ENCODE measurements at regions of chr22 and their contacts with region 1.

Region 1: DNA sequence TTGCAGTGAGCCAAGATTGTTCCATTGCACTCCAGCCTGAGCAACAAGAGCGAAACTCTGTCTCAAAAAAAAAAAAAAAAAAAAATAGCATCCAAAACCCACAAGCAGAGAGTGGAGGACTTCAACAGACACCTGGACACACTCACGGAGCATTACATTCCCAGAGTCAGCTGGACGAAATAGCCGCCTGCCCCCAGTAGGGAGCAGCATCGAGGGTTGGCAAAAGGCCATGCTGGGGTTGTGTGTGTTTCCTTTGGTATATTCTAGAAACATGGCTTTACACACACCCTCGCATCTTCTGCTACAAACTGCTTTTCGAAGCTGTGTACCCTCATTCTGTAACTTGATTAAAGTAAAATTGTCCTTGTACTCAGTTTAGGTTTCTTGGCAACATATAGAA is 5.3 kb downstream of the ADA2 start:
- DNase-seq: peak; percentile 74
- ATAC-seq: peak; percentile 49
- H3K4me3 Mint-ChIP-seq: no peak overlapping the region
- H3K27ac Mint-ChIP-seq: no peak overlapping the region
- H3K4me1 Mint-ChIP-seq: peaks cover 46% of the 10 kb centered on the region
- H3K27me3 Mint-ChIP-seq: no peaks in the 10 kb centered on the region

Region 2: GRCh38 chr22:17077255-17077654 is 136.7 kb before region 1 on chr22:
- CTCF ChIA-PET with region 1: interaction called, 5 read pairs
- POLR2A ChIA-PET with region 1: no interaction called
- intact Hi-C with region 1: loop called in 1 of 2 experiments (anchors 1 kb)
- DNase-seq: no peak
- ATAC-seq: no peak
- H3K4me3 Mint-ChIP-seq: no peak overlapping the region
- H3K27ac Mint-ChIP-seq: no peak overlapping the region
- H3K4me1 Mint-ChIP-seq: peaks cover 24% of the 10 kb centered on the region
- H3K27me3 Mint-ChIP-seq: no peaks in the 10 kb centered on the region

Region 3: GRCh38 chr22:17258015-17258787 is 44.2 kb after region 1 on chr22:
- CTCF ChIA-PET with region 1: no interaction called
- POLR2A ChIA-PET with region 1: no interaction called
- intact Hi-C with region 1: loop called in 1 of 2 experiments (anchors 1 kb)
- DNase-seq: peak; percentile 79
- ATAC-seq: peak; percentile 90
- H3K4me3 Mint-ChIP-seq: no peak overlapping the region
- H3K27ac Mint-ChIP-seq: peak overlapping the region; percentile 37
- H3K4me1 Mint-ChIP-seq: peaks cover 21% of the 10 kb centered on the region
- H3K27me3 Mint-ChIP-seq: no peaks in the 10 kb centered on the region

Region 4: GRCh38 chr22:17501679-17502285 is 287.8 kb after region 1 on chr22:
- CTCF ChIA-PET with region 1: interaction called, 7 read pairs
- POLR2A ChIA-PET with region 1: no interaction called
- intact Hi-C with region 1: loop called in 1 of 2 experiments (anchors 5 kb)
- DNase-seq: peak; percentile 20
- ATAC-seq: peak; percentile 63
- H3K4me3 Mint-ChIP-seq: no peak overlapping the region
- H3K27ac Mint-ChIP-seq: no peak overlapping the region
- H3K4me1 Mint-ChIP-seq: no peaks in the 10 kb centered on the region
- H3K27me3 Mint-ChIP-seq: peaks cover 6% of the 10 kb centered on the region

Region 5: DNA sequence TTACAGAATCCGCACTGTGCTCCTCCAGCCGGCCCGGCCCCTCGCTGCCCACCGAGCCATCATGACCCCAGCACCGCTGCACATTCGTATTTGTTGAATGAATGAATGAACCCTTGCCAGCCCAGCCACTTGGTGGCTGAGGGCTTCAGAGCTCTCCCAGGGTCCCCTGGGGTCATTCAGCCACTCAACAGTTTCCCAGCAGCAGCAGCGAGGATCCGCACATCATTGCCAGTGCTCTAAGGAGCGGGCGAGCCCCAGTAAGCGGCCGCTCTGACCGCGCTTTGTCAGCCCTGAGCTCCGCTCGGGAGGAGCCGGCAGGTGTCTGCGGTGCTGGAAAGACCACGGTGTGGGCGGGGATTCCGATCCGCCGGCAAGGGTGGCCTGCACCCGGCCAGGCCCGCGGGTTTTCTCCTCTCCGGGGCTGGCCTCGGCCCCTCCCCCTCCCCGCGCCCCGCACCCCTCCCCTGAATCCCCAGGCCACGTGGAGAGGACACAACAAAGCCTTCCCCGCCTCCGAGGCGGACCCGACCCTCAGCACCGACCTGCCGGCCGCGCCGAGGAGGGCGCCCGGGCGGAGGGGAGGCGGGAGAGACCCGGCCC is 559.7 kb after region 1 on chr22:
- CTCF ChIA-PET with region 1: no interaction called
- POLR2A ChIA-PET with region 1: no interaction called
- intact Hi-C with region 1: loop called in 1 of 2 experiments (anchors 5 kb)
- DNase-seq: peak; percentile 81
- ATAC-seq: peak; percentile 51
- H3K4me3 Mint-ChIP-seq: peak overlapping the region; percentile 75
- H3K27ac Mint-ChIP-seq: no peak overlapping the region
- H3K4me1 Mint-ChIP-seq: peaks cover 75% of the 10 kb centered on the region
- H3K27me3 Mint-ChIP-seq: peaks cover 2% of the 10 kb centered on the region

Measured in activated CD4-positive, alpha-beta T cell treated with anti-CD3 and anti-CD28 coated beads for 36 hours (primary cell).